ENCODE measurements at regions of chr2 and their contacts with region 1.

Region 1: DNA sequence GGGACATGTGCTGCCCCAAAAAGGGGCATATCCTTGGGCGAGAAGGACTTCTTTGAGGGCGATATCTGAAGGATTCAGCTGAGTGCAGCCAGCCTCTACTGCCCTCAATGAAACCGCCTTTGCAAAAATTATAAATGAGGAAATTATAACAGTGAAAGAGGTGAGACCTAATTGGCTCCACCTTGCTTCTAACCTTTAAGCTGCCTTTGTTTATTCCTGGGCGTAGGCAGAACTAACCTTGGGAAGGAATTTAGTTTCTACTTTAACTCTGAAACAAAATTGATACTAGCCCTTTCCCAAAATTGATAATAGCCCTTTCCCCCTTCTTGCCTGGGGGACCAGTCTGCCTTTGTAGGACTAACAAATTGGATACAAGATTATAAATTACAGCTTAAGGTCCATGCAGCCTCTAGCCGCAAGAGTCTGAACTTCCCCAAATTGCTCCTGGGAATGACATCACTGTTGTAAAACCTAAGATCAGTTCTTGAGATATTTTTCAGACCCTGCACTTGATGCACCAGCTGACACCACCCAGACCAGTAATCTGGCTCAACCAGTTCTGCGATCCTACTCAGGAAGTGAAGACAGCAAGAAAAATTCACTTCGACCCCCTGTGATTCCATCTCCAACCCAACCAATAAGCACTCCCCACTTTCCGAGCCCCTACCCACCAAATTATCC is 36.0 kb upstream of the ASAP2 start:
- DNase-seq: peak; percentile 68 to 97
- H3K4me3 ChIP-seq: peak overlapping the region; percentile 32; the same call in 1 of the 2 replicates
- H3K27ac ChIP-seq: peak overlapping the region; percentile 73
- H3K4me1 ChIP-seq: peaks cover 85% of the 10 kb centered on the region
- H3K27me3 ChIP-seq: no peaks in the 10 kb centered on the region
- CTCF ChIP-seq: no peak; the same call in 1 of the 2 replicates

Region 2: GRCh38 chr2:9230051-9230802 is 59.6 kb after region 1 on chr2:
- CTCF ChIA-PET with region 1: no interaction called
- POLR2A ChIA-PET with region 1: no interaction called
- intact Hi-C with region 1: no loop called
- DNase-seq: no peak
- H3K4me3 ChIP-seq: no peak overlapping the region
- H3K27ac ChIP-seq: peak overlapping the region; percentile 98
- H3K4me1 ChIP-seq: peaks cover 65% of the 10 kb centered on the region
- H3K27me3 ChIP-seq: no peaks in the 10 kb centered on the region
- CTCF ChIP-seq: no peak

Region 3: GRCh38 chr2:9240751-9241150 is 70.2 kb after region 1 on chr2:
- CTCF ChIA-PET with region 1: no interaction called
- POLR2A ChIA-PET with region 1: interaction called, 19 read pairs
- intact Hi-C with region 1: loop called (anchors 5 kb)
- DNase-seq: peak in 1 of 2 experiments; percentile 26
- H3K4me3 ChIP-seq: no peak overlapping the region
- H3K27ac ChIP-seq: peak overlapping the region; percentile 19; the same call in 1 of the 2 replicates
- H3K4me1 ChIP-seq: peaks cover 72% of the 10 kb centered on the region
- H3K27me3 ChIP-seq: no peaks in the 10 kb centered on the region
- CTCF ChIP-seq: no peak

Measured in PC-9 (cell line).